Activated naive CD4-positive, alpha-beta T cell treated with anti-CD3 and anti-CD28 coated beads for 36 hours (primary cell): ENCODE measurements at regions of chr18 and their contacts with region 1.

Region 1: GRCh38 chr18:658001-658946 is 821 bp downstream of the TYMS start:
- DNase-seq: peak; percentile 88
- H3K4me3 Mint-ChIP-seq: peak overlapping the region; percentile 93
- H3K27ac Mint-ChIP-seq: peak overlapping the region; percentile 87
- H3K4me1 Mint-ChIP-seq: peaks cover 14% of the 10 kb centered on the region
- H3K27me3 Mint-ChIP-seq: peaks cover 29% of the 10 kb centered on the region

Region 2: GRCh38 chr18:111292-112014 is 546.8 kb before region 1 on chr18:
- CTCF ChIA-PET with region 1: no interaction called
- intact Hi-C with region 1: loop called (anchors 2 kb)
- DNase-seq: peak; percentile 69
- H3K4me3 Mint-ChIP-seq: peak overlapping the region; percentile 84
- H3K27ac Mint-ChIP-seq: peak overlapping the region; percentile 96
- H3K4me1 Mint-ChIP-seq: peaks cover 16% of the 10 kb centered on the region
- H3K27me3 Mint-ChIP-seq: no peaks in the 10 kb centered on the region

Region 3: DNA sequence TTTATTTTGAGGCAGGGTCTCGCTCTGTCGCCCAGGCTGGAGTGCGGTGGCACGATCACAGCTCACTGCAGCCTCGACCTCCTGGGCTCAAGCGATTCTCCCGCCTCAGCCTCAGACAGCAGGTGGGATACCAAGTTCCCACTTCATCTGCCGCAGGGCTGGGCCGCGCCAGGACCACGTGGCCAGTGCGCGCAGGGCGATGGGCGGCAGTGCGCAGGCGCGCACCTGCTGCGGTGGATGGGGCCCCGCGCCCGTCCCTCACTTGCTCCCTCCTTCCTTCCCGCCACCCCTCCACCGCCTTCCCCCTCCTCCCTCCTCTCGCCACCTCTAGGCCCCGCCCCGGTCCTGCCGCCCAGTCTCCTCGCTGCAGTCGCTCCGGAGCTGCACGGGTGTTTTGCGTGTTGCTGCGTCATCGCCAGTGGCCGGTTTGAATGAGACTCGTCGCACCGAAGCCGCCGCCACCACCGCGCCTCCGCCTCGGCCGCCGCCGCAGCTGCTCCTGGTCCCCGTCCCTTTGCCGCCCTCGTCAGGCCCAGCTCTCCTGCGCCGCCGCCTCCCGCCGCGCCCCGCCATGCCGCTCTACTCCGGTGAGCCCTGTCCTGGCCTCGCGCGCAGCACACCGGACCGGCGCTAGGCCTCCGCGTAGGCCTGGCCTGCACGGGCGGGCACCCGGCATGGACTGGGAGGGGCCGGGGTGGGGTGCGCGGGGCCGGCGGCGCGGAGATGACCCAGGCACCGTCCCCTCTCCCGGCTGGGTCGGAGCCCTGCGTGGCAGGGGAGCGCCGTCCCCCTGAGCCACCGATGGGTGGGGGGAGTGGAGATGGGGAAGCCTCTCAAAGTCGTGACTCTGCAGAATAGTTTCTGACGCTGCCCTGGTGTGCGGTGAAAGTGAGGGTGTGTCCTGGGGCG is 499.9 kb before region 1 on chr18 and contains the start of gene USP14:
- CTCF ChIA-PET with region 1: no interaction called
- intact Hi-C with region 1: loop called (anchors 1 kb)
- DNase-seq: peak; percentile 99
- H3K4me3 Mint-ChIP-seq: peak within 1 kb of the TSS; percentile 85
- H3K27ac Mint-ChIP-seq: peak within 1 kb of the TSS; percentile 92
- H3K4me1 Mint-ChIP-seq: peaks cover 37% of the 10 kb centered on the region
- H3K27me3 Mint-ChIP-seq: no peaks in the 10 kb centered on the region
- total RNA-seq, gene USP14: 90.0 to 96.6 TPM

Region 4: DNA sequence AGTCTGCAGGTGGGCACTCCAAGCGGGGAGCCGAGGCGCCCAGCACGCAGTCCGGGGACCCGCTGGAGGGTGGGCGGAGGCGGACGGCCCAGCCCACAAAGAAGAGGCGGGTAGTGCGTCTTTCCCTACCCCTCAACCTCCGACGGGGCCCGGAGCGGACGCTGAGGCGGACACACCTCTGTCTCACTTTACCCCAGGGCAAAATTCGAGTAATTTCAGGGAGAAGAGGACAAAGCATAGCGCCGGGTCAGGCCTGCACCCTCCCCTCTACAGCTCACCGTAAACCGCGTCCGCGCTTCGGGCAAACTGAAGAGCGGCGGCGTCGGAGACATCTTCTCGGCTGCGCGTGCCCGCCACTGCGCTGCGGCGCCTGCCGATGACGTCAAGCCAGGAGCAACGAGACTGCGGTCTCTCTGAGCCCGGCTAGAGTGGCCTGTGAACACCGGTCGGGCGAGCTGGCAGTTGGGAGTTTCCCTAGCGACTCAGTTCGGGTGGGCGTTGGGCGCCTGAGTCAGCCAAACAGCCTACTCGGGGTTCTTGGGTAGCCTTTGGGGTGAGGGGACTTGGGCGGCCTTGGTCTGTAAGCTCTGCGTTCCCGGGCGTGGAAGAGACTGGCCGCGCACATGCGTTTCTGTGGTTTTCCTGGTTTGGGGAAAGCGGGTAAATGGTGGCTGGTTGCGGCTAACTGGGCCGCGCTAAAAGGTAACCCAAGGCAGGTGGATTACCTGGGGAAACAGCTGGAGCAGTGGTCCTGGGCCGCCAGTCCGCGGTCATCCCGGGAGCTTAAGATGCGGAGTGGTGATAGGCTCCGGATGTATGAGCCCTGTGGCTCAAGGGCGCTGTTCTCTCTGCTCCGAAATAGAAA is 390.4 kb before region 1 on chr18 and contains the start of gene THOC1:
- CTCF ChIA-PET with region 1: no interaction called
- intact Hi-C with region 1: loop called (anchors 1 kb)
- DNase-seq: peak; percentile 97
- H3K4me3 Mint-ChIP-seq: peak within 1 kb of the TSS; percentile 95
- H3K27ac Mint-ChIP-seq: peak within 1 kb of the TSS; percentile 99
- H3K4me1 Mint-ChIP-seq: peaks cover 39% of the 10 kb centered on the region
- H3K27me3 Mint-ChIP-seq: no peaks in the 10 kb centered on the region
- total RNA-seq, gene THOC1: 63.5 to 66.2 TPM

Region 5: GRCh38 chr18:675307-675706 is 17.0 kb after region 1 on chr18:
- CTCF ChIA-PET with region 1: interaction called, 3 read pairs
- intact Hi-C with region 1: loop called (anchors 2 kb)
- DNase-seq: no peak
- H3K4me3 Mint-ChIP-seq: no peak overlapping the region
- H3K27ac Mint-ChIP-seq: no peak overlapping the region
- H3K4me1 Mint-ChIP-seq: peaks cover under 1% of the 10 kb centered on the region
- H3K27me3 Mint-ChIP-seq: no peaks in the 10 kb centered on the region

Region 6: GRCh38 chr18:681985-682384 is 23.7 kb after region 1 on chr18:
- CTCF ChIA-PET with region 1: interaction called, 3 read pairs
- intact Hi-C with region 1: loop called (anchors 1 kb)
- DNase-seq: peak; percentile 77
- H3K4me3 Mint-ChIP-seq: no peak overlapping the region
- H3K27ac Mint-ChIP-seq: peak overlapping the region; percentile 73
- H3K4me1 Mint-ChIP-seq: peaks cover 17% of the 10 kb centered on the region
- H3K27me3 Mint-ChIP-seq: no peaks in the 10 kb centered on the region

Region 7: DNA sequence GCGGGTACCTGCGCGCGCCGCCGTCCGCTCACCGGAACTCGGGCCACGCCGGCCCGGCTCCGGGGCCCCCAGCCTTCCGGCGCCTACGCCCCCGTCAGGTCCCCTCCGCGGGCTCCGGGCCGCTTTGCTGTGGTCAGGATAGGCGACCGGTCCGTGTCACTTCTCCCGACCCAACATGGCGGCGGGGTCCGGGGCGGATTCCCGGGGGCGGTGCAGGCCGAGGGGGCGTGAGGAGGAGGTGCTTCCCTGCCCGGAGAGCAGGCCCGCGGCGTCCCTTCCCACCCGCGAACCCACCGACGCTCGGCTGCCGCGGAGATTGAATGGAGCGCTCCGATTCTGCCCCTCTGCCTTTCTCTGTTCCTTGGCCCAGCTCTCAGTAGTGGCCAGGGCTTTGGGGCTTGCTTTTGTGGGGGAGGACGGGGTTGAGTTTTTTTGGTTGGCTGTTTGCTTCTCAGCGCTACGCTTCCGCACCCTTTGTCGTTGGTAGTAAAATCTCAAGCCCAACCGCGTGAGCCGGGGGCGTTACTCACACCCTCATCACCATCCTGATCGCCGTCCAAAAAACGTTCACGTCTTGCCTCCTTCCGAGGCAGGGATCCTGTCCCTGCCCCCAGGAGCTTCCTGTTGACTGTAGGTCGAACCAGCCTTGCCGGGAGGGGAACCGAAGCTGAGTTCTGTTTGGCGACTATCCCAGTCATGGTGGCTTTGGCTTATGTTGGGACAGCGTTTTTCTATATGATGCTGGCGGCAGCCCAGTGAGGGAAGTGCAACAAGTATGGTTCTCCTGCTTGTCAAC is 154.3 kb after region 1 on chr18:
- CTCF ChIA-PET with region 1: interaction called, 4 read pairs
- intact Hi-C with region 1: loop called (anchors 1 kb)
- DNase-seq: peak; percentile 82
- H3K4me3 Mint-ChIP-seq: peak overlapping the region; percentile 95
- H3K27ac Mint-ChIP-seq: peak overlapping the region; percentile 99
- H3K4me1 Mint-ChIP-seq: peaks cover 54% of the 10 kb centered on the region
- H3K27me3 Mint-ChIP-seq: no peaks in the 10 kb centered on the region